AG04450 (cell line): ENCODE measurements at regions of chr3 and their contacts with region 1.

Region 1: DNA sequence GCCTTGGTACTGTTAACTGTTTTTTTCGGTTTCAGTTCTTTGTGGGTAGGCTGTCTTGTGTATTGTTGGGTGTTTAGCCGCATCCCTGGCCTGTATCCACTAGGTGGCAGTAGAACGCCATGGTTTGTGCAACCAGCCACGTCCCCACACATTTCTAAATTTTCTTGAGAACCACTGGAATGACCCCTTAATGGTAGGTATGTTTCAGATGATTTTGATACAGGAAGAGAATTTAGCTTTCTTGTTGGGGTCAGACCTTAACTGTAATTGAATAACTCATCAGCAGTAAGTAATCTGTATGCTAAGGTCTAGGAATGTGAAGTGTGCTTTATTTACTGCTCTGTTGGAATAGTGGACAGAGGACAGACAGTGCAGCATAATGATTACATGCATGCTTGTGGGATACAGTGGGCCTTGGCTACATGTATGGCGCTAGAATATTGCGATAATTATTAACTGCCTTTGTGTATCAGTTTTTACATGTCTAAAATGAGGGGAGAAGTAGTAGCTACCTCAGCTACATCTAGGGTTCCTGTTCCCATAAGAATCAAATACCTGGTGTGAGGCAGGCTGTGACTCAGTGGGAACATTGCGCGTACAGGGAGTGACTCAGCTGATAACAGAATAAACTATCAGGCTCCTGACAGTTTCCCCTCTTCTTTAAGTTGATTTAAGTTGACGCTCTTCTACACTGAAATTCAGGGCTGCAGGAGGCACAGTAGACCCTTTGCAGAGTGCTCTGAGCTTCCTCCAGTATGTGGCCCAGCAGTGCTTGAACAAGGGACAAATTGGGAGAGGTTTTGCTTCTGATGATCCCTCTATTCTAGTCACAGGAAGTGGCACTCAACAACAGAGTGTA is 25.0 kb upstream of the GPR171 start:
- DNase-seq: peak; percentile 73
- H3K4me3 ChIP-seq: no peak overlapping the region
- H3K27ac ChIP-seq: peak overlapping the region; percentile 73
- H3K27me3 ChIP-seq: no peaks in the 10 kb centered on the region
- CTCF ChIP-seq: peak; percentile 97

Region 2: GRCh38 chr3:151124476-151124875 is 103.6 kb before region 1 on chr3:
- CTCF ChIA-PET with region 1: no interaction called
- POLR2A ChIA-PET with region 1: no interaction called
- DNase-seq: no peak
- H3K4me3 ChIP-seq: no peak overlapping the region
- H3K27ac ChIP-seq: no peak overlapping the region
- H3K27me3 ChIP-seq: no peaks in the 10 kb centered on the region
- CTCF ChIP-seq: no peak

Region 3: DNA sequence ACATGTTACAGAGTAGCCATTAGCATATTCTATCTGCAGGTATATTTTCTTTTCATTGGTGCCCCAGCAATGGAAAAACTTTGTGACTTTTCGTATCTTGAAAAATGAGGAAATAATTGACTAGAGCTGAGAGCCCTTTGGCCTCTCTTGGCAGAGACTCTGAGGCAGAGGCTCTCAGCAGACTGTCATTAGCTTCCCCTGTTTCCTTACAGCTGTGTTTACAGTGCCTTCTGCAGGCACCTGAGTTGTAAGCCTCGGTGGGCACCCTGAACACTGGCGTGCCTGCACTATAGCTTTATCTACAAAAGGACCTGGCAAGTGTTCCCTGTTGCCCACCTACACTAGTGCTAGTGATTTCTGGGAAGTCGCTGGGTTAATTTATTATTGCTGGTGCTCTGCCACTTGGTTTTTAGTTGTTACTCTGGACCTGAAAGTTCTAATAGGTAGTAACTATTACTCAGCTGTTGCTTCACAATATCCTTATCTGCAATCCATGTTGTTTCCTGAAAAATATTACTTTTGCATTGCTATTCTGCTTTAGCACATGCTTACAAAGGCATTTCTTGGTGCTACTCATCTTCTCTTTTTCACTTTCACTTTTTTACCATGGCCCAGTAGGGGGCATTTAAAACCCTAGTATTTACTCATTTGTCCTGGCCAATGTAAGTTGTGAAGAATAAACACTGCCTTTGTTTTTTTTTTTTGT is 17.2 kb before region 1 on chr3:
- CTCF ChIA-PET with region 1: interaction called, 17 read pairs
- POLR2A ChIA-PET with region 1: no interaction called
- DNase-seq: no peak
- H3K4me3 ChIP-seq: no peak overlapping the region
- H3K27ac ChIP-seq: no peak overlapping the region
- H3K27me3 ChIP-seq: no peaks in the 10 kb centered on the region
- CTCF ChIP-seq: peak; percentile 22; the same call in 1 of the 2 replicates

Region 4: GRCh38 chr3:151259664-151260063 is 31.6 kb after region 1 on chr3:
- CTCF ChIA-PET with region 1: interaction called, 20 read pairs
- POLR2A ChIA-PET with region 1: interaction called, 3 read pairs
- DNase-seq: peak; percentile 10
- H3K4me3 ChIP-seq: no peak overlapping the region
- H3K27ac ChIP-seq: no peak overlapping the region
- H3K27me3 ChIP-seq: peaks cover 2% of the 10 kb centered on the region
- CTCF ChIP-seq: no peak

Region 5: DNA sequence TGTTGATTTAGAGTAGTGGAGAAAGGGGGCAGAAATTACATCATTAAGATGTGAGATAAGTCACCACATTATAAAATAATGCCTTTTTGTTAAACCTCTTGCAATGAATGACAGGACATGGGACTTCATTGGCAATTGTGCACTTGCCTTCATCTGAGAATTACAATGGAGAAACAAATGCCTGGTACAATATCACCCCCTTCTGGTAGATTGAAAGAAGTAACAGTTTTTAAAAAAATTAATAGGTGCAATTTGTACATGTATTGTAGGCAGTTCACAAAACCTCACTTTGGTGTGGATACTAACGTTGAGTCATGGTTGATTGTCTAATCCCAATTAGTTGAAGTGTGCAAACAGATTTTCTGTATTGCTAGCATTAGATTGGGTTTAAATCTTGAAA is 54.9 kb after region 1 on chr3:
- CTCF ChIA-PET with region 1: interaction called, 182 read pairs
- POLR2A ChIA-PET with region 1: no interaction called
- DNase-seq: no peak
- H3K4me3 ChIP-seq: no peak overlapping the region
- H3K27ac ChIP-seq: no peak overlapping the region
- H3K27me3 ChIP-seq: no peaks in the 10 kb centered on the region
- CTCF ChIP-seq: peak; percentile 65

Region 6: GRCh38 chr3:151327571-151328198 is 99.6 kb after region 1 on chr3:
- CTCF ChIA-PET with region 1: interaction called, 26 read pairs
- POLR2A ChIA-PET with region 1: no interaction called
- DNase-seq: no peak
- H3K4me3 ChIP-seq: no peak overlapping the region
- H3K27ac ChIP-seq: no peak overlapping the region
- H3K27me3 ChIP-seq: no peaks in the 10 kb centered on the region
- CTCF ChIP-seq: peak; percentile 64

Region 7: DNA sequence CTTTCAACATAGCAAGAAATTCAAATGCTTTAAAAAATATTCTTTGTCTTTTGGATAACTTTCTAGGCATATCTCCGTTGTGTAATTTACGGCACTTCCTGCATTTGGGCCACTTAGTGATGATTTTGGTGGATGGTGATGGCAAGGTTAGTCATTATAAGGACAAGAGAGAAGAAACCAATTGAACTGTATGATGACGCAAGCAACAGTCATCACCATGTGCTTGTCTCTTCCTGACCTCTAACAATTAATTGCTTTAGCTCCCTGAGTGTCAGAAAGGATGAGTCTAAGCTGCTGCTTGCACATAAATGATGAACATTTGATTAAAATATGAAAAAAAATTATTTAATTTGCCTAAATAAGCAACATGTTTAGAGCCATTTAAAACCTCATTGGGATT is 167.8 kb after region 1 on chr3:
- CTCF ChIA-PET with region 1: no interaction called
- POLR2A ChIA-PET with region 1: no interaction called
- DNase-seq: no peak
- H3K4me3 ChIP-seq: no peak overlapping the region
- H3K27ac ChIP-seq: no peak overlapping the region
- H3K27me3 ChIP-seq: no peaks in the 10 kb centered on the region
- CTCF ChIP-seq: no peak

Region 8: DNA sequence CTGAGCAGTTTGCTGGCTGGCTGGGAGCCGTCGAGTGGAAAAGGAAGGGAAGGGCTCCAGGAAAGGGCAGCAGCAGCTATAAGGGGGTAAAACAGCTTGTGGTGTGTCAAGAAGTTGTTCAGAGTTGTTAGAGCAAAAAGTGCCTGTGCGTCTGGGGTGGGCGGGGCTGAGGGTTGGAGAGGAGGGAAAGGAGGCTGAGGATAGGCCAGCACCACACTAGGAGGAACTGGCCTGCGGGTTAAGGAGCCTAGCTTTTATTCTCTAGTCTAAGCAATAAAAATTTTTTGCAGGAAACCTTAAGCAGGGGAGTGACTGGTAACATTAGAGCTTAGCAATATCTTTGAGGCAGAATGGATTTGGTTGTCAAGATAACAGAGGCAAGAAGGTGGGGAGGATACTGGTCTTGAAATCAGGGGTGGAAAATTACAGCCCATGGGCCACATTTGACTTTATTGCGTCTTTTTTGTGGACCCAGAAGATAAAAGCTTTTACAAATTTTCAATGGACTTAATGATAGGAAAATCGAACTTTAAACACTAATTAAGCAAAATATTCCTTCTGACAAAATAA is 371.2 kb after region 1 on chr3:
- CTCF ChIA-PET with region 1: no interaction called
- POLR2A ChIA-PET with region 1: no interaction called
- DNase-seq: no peak
- H3K4me3 ChIP-seq: no peak overlapping the region
- H3K27ac ChIP-seq: no peak overlapping the region
- H3K27me3 ChIP-seq: no peaks in the 10 kb centered on the region
- CTCF ChIP-seq: no peak

Region 9: GRCh38 chr3:151644020-151644620 is 416.1 kb after region 1 on chr3:
- CTCF ChIA-PET with region 1: no interaction called
- POLR2A ChIA-PET with region 1: no interaction called
- DNase-seq: no peak
- H3K4me3 ChIP-seq: no peak overlapping the region
- H3K27ac ChIP-seq: no peak overlapping the region
- H3K27me3 ChIP-seq: no peaks in the 10 kb centered on the region
- CTCF ChIP-seq: no peak

Region 10: DNA sequence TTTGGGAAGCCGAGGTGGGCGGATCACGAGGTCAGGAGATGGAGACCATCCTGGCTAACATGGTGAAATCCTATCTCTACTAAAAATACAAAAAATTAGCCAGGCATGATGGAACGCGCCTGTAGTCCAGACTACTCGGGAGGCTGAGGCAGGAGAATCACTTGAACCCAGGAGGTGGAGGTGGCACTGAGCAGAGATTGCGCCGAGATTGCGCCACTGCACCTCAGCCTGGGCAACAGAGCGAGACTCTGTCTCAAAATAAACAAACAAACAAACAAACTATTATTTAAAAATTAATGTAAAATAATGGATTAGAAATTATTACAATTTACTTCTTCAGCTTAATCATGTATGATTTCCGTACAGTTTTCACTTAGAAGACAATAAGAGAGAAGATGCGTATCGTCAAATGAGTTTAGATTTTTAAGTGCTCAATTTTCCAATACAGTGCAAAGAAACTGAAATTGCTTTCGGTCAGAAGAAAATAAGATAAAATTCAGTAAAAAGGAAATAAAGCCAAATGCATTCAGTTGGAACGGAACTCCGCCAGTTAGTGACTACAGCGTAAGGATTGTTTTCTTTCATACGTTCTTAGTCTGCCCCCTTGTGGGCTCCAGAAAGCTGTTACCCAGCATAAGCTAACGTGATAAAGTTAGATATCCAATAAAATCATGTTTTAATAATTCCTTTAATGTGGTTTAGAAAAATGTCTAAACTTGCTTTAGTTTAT is 610.7 kb after region 1 on chr3:
- CTCF ChIA-PET with region 1: interaction called, 29 read pairs
- POLR2A ChIA-PET with region 1: no interaction called
- DNase-seq: peak; percentile 65
- H3K4me3 ChIP-seq: no peak overlapping the region
- H3K27ac ChIP-seq: no peak overlapping the region
- H3K27me3 ChIP-seq: no peaks in the 10 kb centered on the region
- CTCF ChIP-seq: peak; percentile 81